Esophagus muscularis mucosa (tissue), 4 donors: ENCODE measurements at regions of chr16 and their contacts with region 1.

Region 1: DNA sequence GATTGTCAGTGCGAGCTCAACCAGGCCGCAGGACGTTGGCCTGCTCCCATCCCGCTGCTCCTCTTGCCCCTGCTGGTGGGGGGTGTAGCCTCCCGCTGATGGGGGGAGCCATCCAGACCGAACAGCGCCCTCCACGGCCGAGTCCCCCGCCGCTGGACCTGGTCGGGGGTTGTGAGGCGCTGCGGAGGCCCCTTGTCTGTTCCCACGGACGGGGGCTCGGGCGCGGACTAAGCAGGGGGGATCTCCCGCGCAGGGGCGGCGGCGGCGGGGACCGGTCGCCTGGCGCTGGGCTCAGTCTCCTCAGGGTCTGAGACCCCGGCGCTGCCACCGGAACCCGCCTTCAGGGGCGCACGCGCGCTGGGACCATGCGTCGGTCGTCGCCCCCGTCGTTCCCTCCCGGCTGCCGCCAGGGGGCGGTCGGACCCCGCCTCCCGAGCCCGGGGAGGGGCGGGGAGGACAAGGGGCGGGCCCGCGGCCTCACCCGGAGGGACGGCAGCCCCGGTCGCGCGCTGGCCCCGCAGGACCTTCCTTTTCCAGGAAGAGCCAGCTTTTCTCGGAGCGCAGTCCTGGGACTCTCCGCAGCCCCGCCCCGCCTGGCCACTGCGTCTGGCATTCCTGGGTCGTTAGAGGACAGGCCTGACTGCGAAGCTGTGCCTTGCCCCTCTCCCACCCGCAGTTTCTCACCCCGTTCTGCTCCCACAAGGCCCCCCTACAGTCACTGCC is 6.3 kb upstream of the IL32 start:
- DNase-seq: peak; percentile 94
- H3K4me3 ChIP-seq: peak overlapping the region; percentile 68 to 94 (median 80)
- H3K27ac ChIP-seq: peak overlapping the region; percentile 67 to 74 (median 69)
- H3K4me1 ChIP-seq: peaks cover 21 to 26% (median 23%) of the 10 kb centered on the region in 4 donors
- H3K27me3 ChIP-seq: peaks cover 0 to 12% (median 0%) of the 10 kb centered on the region in 4 donors
- CTCF ChIP-seq: peak; percentile 95 to 99 (median 97)
- EP300 ChIP-seq: no peak
- POLR2A ChIP-seq: no peak

Region 2: GRCh38 chr16:2752035-2752849 is 306.9 kb before region 1 on chr16 and contains the start of gene SRRM2:
- intact Hi-C with region 1: no loop called
- DNase-seq: peak; percentile 99
- H3K4me3 ChIP-seq: peak within 1 kb of the TSS; percentile 74 to 95 (median 88)
- H3K27ac ChIP-seq: peak within 1 kb of the TSS; percentile 98 to 100 (median 100)
- H3K4me1 ChIP-seq: peaks cover 42 to 51% (median 47%) of the 10 kb centered on the region in 4 donors
- H3K27me3 ChIP-seq: no peaks in the 10 kb centered on the region
- CTCF ChIP-seq: peak in 1 of 3 experiments; percentile 7
- EP300 ChIP-seq: no peak
- POLR2A ChIP-seq: peak; percentile 99
- total RNA-seq, gene SRRM2: 126 to 325 (median 234) TPM

Region 3: GRCh38 chr16:3129137-3130131 is 70.3 kb after region 1 on chr16:
- intact Hi-C with region 1: loop called (anchors 2 kb)
- DNase-seq: peak; percentile 94
- H3K4me3 ChIP-seq: peak overlapping the region; percentile 47 to 67 (median 52)
- H3K27ac ChIP-seq: peak overlapping the region; percentile 54 to 75 (median 68)
- H3K4me1 ChIP-seq: peaks cover 38 to 55% (median 50%) of the 10 kb centered on the region in 4 donors
- H3K27me3 ChIP-seq: no peaks in the 10 kb centered on the region
- CTCF ChIP-seq: peak; percentile 86 to 90 (median 89)
- EP300 ChIP-seq: no peak
- POLR2A ChIP-seq: no peak

Region 4: GRCh38 chr16:3165111-3165822 is 106.1 kb after region 1 on chr16:
- intact Hi-C with region 1: loop called (anchors 5 kb)
- DNase-seq: no peak
- H3K4me3 ChIP-seq: peak overlapping the region; percentile 24 to 47 (median 38)
- H3K27ac ChIP-seq: no peak overlapping the region
- H3K4me1 ChIP-seq: peaks cover 8 to 10% (median 10%) of the 10 kb centered on the region in 4 donors
- H3K27me3 ChIP-seq: peaks cover under 1 to 59% (median 10%) of the 10 kb centered on the region in 4 donors
- CTCF ChIP-seq: no peak
- EP300 ChIP-seq: no peak
- POLR2A ChIP-seq: no peak

Region 5: GRCh38 chr16:3274490-3274889 is 215.3 kb after region 1 on chr16:
- intact Hi-C with region 1: no loop called
- DNase-seq: no peak
- H3K4me3 ChIP-seq: no peak overlapping the region
- H3K27ac ChIP-seq: no peak overlapping the region
- H3K4me1 ChIP-seq: no peaks in the 10 kb centered on the region
- H3K27me3 ChIP-seq: no peaks in the 10 kb centered on the region
- CTCF ChIP-seq: no peak
- EP300 ChIP-seq: no peak
- POLR2A ChIP-seq: no peak